Activated CD4-positive, alpha-beta memory T cell treated with anti-CD3 and anti-CD28 coated beads for 36 hours (primary cell): ENCODE measurements at regions of chrX and their contacts with region 1.

Region 1: GRCh38 chrX:44669626-44670025 is 127.0 kb upstream of the FUNDC1 start:
- DNase-seq: no peak
- H3K4me3 Mint-ChIP-seq: no peak overlapping the region
- H3K27ac Mint-ChIP-seq: no peak overlapping the region
- H3K4me1 Mint-ChIP-seq: no peaks in the 10 kb centered on the region
- H3K27me3 Mint-ChIP-seq: no peaks in the 10 kb centered on the region

Region 2: GRCh38 chrX:45022150-45022549 is 352.5 kb after region 1 on chrX:
- CTCF ChIA-PET with region 1: no interaction called
- POLR2A ChIA-PET with region 1: no interaction called
- intact Hi-C with region 1: loop called (anchors 5 kb)
- DNase-seq: no peak
- H3K4me3 Mint-ChIP-seq: no peak overlapping the region
- H3K27ac Mint-ChIP-seq: no peak overlapping the region
- H3K4me1 Mint-ChIP-seq: peaks cover 41% of the 10 kb centered on the region
- H3K27me3 Mint-ChIP-seq: no peaks in the 10 kb centered on the region